A549 (cell line): ENCODE measurements at regions of chr5 and their contacts with region 1.

Region 1: DNA sequence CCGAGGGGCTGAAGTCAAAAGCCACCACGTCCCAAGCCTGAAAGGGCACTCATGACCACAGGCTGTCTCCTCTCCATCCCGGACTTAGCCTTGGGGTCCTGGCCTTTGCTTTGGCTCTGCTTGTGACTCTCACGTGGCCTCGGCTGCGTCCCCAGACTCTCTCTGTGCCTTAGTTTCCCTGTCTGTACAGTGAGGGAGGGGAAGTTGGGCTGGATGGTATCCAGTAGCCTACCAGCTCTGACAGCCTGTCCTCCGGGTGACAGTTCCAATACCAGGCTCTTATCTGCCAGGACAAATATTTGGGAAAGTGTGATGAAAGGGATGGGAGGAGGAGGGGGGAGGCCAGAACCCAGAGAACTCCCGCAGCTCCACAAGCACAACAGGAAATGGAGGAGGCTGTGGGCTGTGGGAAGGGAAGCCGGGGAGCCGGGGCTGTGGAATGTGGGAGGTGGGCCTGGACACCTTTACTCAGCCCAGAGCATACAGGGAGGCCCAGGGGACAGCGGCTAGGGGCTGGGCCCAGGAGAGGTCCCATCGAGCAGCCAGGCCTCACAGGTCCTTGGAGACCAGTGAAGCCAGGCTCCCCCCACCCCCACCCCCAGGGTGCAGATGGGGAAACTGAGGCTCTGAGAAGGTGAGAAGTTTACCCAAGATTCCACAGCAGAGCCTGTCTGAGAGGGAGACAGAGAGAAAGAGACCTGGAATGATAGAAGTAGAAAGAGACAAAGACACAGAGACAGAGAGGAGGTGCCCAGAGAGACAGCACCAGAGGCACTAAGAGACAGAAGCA is 18.3 kb downstream of the PDGFRB start:
- DNase-seq: no peak
- ATAC-seq: no peak
- H3K4me3 ChIP-seq: no peak overlapping the region
- H3K27ac ChIP-seq: peak overlapping the region; percentile 9 to 93; a peak in 3 of 6 replicates
- H3K4me1 ChIP-seq: peaks cover 46% of the 10 kb centered on the region
- CTCF ChIP-seq: no peak
- EP300 ChIP-seq: no peak
- POLR2A ChIP-seq: no peak
- RAD21 ChIP-seq: no peak

Region 2: GRCh38 chr5:149759986-149760853 is 377.1 kb before region 1 on chr5:
- CTCF ChIA-PET with region 1: no interaction called
- POLR2A ChIA-PET with region 1: no interaction called
- DNase-seq: peak in 1 of 2 experiments; percentile 19
- ATAC-seq: peak in 1 of 2 experiments; percentile 52; a peak in 3 of 6 replicates
- H3K4me3 ChIP-seq: no peak overlapping the region
- H3K27ac ChIP-seq: peak overlapping the region in 1 of 2 experiments; percentile 24; a peak in 1 of 6 replicates
- H3K4me1 ChIP-seq: peaks cover 23% of the 10 kb centered on the region; the same call in 2 of the 3 replicates
- CTCF ChIP-seq: no peak
- EP300 ChIP-seq: no peak
- POLR2A ChIP-seq: no peak
- RAD21 ChIP-seq: no peak

Region 3: GRCh38 chr5:150009671-150010387 is 127.5 kb before region 1 on chr5:
- CTCF ChIA-PET with region 1: no interaction called
- POLR2A ChIA-PET with region 1: no interaction called
- DNase-seq: no peak
- ATAC-seq: peak in 1 of 2 experiments; percentile 35; a peak in 2 of 6 replicates
- H3K4me3 ChIP-seq: no peak overlapping the region
- H3K27ac ChIP-seq: no peak overlapping the region
- H3K4me1 ChIP-seq: no peaks in the 10 kb centered on the region
- CTCF ChIP-seq: no peak
- EP300 ChIP-seq: no peak
- POLR2A ChIP-seq: no peak
- RAD21 ChIP-seq: no peak

Region 4: GRCh38 chr5:150122158-150122510 is 15.2 kb before region 1 on chr5:
- CTCF ChIA-PET with region 1: interaction called, 98 read pairs
- POLR2A ChIA-PET with region 1: no interaction called
- DNase-seq: peak; percentile 38 to 71
- ATAC-seq: peak; percentile 60 to 83
- H3K4me3 ChIP-seq: no peak overlapping the region
- H3K27ac ChIP-seq: peak overlapping the region in 1 of 2 experiments; percentile 44; a peak in 3 of 6 replicates
- H3K4me1 ChIP-seq: 0 out of 3 replicates have a peak, but pooled peaks cover 7% of the 10 kb centered on the region
- CTCF ChIP-seq: peak; percentile 45
- EP300 ChIP-seq: no peak
- POLR2A ChIP-seq: no peak
- RAD21 ChIP-seq: peak; percentile 31 to 40; a peak in 4 of 5 replicates

Region 5: DNA sequence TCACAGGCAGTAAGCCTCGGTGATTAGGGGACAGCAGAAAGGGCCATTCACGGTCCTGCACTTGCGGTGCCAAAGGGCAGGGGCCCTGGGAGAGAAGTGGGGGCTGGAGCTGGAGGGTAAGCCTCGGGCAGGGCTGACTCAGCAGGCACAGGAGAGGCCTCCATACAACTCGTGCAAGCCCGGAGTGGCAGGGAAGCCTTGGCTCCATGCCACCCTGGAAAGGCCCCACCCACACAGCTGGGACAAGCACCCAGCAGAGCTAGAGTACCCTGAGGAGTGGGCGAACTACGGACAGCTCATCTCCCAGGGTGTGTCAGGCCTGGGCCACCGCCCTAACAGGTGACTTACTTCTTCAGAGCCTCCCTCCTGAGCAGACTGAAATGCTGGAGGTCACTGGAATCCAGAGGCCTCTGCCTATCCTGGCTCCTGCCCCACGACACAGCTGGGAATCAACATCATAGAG is 157.8 kb after region 1 on chr5:
- CTCF ChIA-PET with region 1: no interaction called
- POLR2A ChIA-PET with region 1: no interaction called
- DNase-seq: peak in 1 of 2 experiments; percentile 44
- ATAC-seq: peak; percentile 44 to 67; a peak in 5 of 6 replicates
- H3K4me3 ChIP-seq: no peak overlapping the region
- H3K27ac ChIP-seq: peak overlapping the region; percentile 74 to 87
- H3K4me1 ChIP-seq: peaks cover 49% of the 10 kb centered on the region
- CTCF ChIP-seq: no peak
- EP300 ChIP-seq: no peak
- POLR2A ChIP-seq: no peak
- RAD21 ChIP-seq: no peak